CD4-positive, alpha-beta memory T cell (primary cell): ENCODE measurements at regions of chr12 and their contacts with region 1.

Region 1: DNA sequence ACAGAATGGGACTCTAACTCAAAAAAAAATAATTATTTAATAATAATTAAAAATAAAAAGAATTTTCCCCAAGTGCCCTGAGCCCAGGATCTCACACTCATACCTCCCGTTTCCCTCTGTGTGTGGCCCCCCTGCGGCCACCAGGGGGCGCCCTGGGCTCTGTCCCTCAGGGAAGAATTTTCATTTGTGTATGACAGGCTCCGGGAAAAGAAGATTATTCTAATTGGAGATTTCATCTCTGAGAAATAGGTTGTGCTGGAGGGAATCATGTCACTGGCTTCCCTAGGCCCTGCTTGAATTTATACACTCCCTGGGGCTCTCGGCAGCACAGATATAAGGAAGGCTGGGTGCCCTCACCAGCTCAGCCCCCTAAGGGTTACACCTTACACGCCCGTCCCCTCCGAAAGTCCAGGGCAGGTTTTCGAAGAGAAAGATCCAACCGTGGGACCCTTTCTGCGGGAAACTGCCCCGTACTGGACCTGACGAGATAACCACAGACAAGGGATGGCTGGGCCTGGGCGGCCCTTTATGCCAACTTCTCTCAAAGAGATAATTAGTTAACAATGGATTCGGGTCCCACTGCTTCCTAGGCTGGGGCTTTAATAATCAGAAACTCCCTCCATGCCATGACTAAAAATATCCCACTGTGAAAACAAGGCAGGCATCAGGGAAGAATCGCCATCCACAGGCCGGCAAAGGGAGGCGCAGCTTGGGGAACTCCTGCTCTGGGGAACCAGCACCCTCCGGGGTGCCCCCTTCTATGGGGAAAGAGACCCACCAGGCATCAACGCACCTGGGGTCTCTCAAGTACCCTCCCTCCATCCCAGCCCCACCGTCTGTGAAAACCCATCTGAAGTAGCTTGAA is 80.7 kb downstream of the KDM2B start:
- DNase-seq: peak; percentile 62 to 72 (median 71)
- H3K4me3 ChIP-seq: no peak overlapping the region
- H3K4me3 Mint-ChIP-seq: peak overlapping the region in 1 of 8 donors; percentile 11
- H3K27ac ChIP-seq: no peak overlapping the region
- H3K27ac Mint-ChIP-seq: peak overlapping the region in 3 of 7 donors; percentile 17 to 74 (median 63)
- H3K4me1 ChIP-seq: peaks cover 17% of the 10 kb centered on the region
- H3K4me1 Mint-ChIP-seq: peaks cover 8 to 21% (median 15%) of the 10 kb centered on the region in 4 donors
- H3K27me3 ChIP-seq: no peaks in the 10 kb centered on the region
- H3K27me3 Mint-ChIP-seq: no peaks in the 10 kb centered on the region

Region 2: DNA sequence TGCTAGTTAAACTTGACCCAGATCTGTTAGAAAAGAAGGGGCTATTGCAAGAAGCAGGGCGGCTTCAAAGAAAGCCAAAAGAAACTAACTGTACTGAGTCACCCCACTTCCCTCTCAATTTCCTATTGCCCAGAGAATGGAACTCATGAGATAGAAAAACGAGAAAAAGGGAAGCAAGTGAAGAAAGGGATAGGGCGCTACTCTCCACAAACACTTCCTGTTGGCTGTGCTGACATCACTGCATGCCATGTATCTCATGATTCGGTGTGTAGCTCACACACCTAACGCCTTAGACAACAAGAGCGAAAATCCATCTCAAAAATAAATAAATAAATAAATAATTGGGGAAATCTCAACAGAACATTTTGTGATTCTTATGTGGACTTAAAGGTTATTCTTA is 303.3 kb before region 1 on chr12:
- CTCF ChIA-PET with region 1: no interaction called
- POLR2A ChIA-PET with region 1: no interaction called
- intact Hi-C with region 1: no loop called
- DNase-seq: no peak
- H3K4me3 ChIP-seq: no peak overlapping the region
- H3K4me3 Mint-ChIP-seq: peak overlapping the region in 5 of 8 donors; percentile 15 to 65 (median 39)
- H3K27ac ChIP-seq: no peak overlapping the region
- H3K27ac Mint-ChIP-seq: peak overlapping the region in 2 of 7 donors; percentile 27 to 32
- H3K4me1 ChIP-seq: peaks cover 12% of the 10 kb centered on the region
- H3K4me1 Mint-ChIP-seq: peaks cover 3 to 13% (median 7%) of the 10 kb centered on the region in 4 donors
- H3K27me3 ChIP-seq: no peaks in the 10 kb centered on the region
- H3K27me3 Mint-ChIP-seq: peaks cover 2 to 4% of the 10 kb centered on the region in 2 donors

Region 3: DNA sequence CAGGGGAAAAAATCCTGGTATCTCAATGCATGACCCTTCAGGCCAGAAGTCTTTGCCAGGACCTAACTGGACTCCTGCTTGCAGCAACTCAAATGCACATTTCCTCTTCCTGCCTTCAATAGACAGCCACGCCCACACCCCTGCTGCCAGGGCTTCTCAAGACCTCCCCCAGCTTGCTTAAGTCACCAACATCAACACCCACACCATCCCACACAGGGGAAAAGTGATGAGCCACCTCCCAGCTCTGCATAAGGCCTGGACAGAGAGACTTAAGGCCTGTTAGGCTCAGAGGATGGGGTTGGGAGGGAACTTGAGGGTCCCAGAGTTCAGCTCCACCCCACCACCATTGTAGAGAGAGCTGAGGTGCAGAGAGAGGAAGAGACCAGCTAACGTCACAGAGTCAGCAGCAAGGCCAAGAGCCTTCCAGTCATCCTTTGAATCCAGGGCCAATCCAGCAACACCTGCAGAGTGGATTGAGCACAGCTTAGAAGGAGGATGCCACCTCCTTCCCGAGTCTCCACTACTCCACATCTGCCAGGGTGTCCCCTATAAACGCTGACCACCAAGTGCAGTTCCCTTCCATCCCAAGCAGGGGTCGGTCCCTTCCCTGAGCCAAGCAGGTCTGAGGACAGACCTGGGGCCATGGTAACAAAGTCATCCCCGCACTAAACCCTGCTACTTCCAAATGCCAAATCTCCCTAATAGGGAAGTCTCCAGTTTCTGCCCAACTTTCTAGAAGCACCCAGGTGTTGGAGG is 30.6 kb after region 1 on chr12:
- CTCF ChIA-PET with region 1: interaction called, 10 read pairs
- POLR2A ChIA-PET with region 1: no interaction called
- intact Hi-C with region 1: no loop called
- DNase-seq: peak; percentile 63 to 87 (median 66)
- H3K4me3 ChIP-seq: peak overlapping the region in 1 of 2 donors; percentile 16
- H3K4me3 Mint-ChIP-seq: peak overlapping the region; percentile 26 to 75 (median 58)
- H3K27ac ChIP-seq: peak overlapping the region; percentile 51
- H3K27ac Mint-ChIP-seq: peak overlapping the region; percentile 85 to 95 (median 91)
- H3K4me1 ChIP-seq: peaks cover 58% of the 10 kb centered on the region
- H3K4me1 Mint-ChIP-seq: peaks cover 35 to 66% (median 51%) of the 10 kb centered on the region in 4 donors
- H3K27me3 ChIP-seq: no peaks in the 10 kb centered on the region
- H3K27me3 Mint-ChIP-seq: no peaks in the 10 kb centered on the region

Region 4: GRCh38 chr12:121536899-121537813 is 37.0 kb after region 1 on chr12:
- CTCF ChIA-PET with region 1: interaction called, 6 read pairs
- POLR2A ChIA-PET with region 1: interaction called, 3 read pairs
- intact Hi-C with region 1: loop called (anchors 2 kb)
- DNase-seq: peak; percentile 46 to 75 (median 48)
- H3K4me3 ChIP-seq: peak overlapping the region; percentile 29 to 55
- H3K4me3 Mint-ChIP-seq: peak overlapping the region; percentile 62 to 86 (median 82)
- H3K27ac ChIP-seq: peak overlapping the region; percentile 80
- H3K27ac Mint-ChIP-seq: peak overlapping the region; percentile 95 to 99 (median 95)
- H3K4me1 ChIP-seq: peaks cover 57% of the 10 kb centered on the region
- H3K4me1 Mint-ChIP-seq: peaks cover 29 to 69% (median 48%) of the 10 kb centered on the region in 4 donors
- H3K27me3 ChIP-seq: no peaks in the 10 kb centered on the region
- H3K27me3 Mint-ChIP-seq: no peaks in the 10 kb centered on the region

Region 5: GRCh38 chr12:121678716-121679580 is 178.8 kb after region 1 on chr12:
- CTCF ChIA-PET with region 1: interaction called, 54 read pairs
- POLR2A ChIA-PET with region 1: no interaction called
- intact Hi-C with region 1: loop called (anchors 1 kb)
- DNase-seq: no peak
- H3K4me3 ChIP-seq: no peak overlapping the region
- H3K4me3 Mint-ChIP-seq: no peak overlapping the region
- H3K27ac ChIP-seq: no peak overlapping the region
- H3K27ac Mint-ChIP-seq: peak overlapping the region in 4 of 7 donors; percentile 18 to 70 (median 50)
- H3K4me1 ChIP-seq: peaks cover 3% of the 10 kb centered on the region
- H3K4me1 Mint-ChIP-seq: peaks cover 4 to 10% (median 5%) of the 10 kb centered on the region in 4 donors
- H3K27me3 ChIP-seq: no peaks in the 10 kb centered on the region
- H3K27me3 Mint-ChIP-seq: no peaks in the 10 kb centered on the region